Endothelial cell of umbilical vein (primary cell): ENCODE measurements at regions of chr5 and their contacts with region 1.

Region 1: GRCh38 chr5:176415952-176416924 is at the start of gene CLTB:
- DNase-seq: peak; percentile 81
- H3K4me3 ChIP-seq: peak within 1 kb of the TSS; percentile 78 to 84 (median 82)
- H3K27ac ChIP-seq: peak within 1 kb of the TSS; percentile 86
- H3K4me1 ChIP-seq: peaks cover 12% of the 10 kb centered on the region
- H3K27me3 ChIP-seq: no peaks in the 10 kb centered on the region
- CTCF ChIP-seq: peak; percentile 65 to 86
- POLR2A ChIP-seq: peak; percentile 67
- total RNA-seq, gene CLTB: 73.2 and 108 TPM in 2 replicates

Region 2: DNA sequence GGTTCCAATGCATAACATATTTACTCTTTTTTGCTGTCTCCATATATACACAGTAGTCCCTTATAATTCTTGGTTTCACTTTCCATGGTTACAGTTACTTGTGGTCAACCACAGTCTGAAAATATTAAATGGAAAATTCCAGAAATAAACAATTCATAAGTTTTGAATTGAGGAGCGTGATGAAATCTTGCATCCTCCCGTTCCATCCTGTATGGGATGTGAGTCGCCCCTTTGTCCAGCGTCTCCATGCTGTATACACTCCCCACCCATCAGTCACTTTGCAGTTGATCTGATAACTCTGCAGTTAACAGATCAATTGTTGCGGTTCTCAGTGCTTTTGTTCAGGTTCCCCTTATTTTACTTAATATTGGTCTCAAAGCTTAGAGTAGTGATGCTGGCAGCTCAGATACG is 20.4 kb after region 1 on chr5:
- CTCF ChIA-PET with region 1: interaction called, 17 read pairs
- POLR2A ChIA-PET with region 1: no interaction called
- dilution Hi-C with region 1: no loop called
- intact Hi-C with region 1: loop called (anchors 1 kb)
- DNase-seq: peak; percentile 47
- H3K4me3 ChIP-seq: peak overlapping the region in 1 of 3 experiments; percentile 32
- H3K27ac ChIP-seq: peak overlapping the region; percentile 68
- H3K4me1 ChIP-seq: peaks cover 24% of the 10 kb centered on the region
- H3K27me3 ChIP-seq: no peaks in the 10 kb centered on the region
- CTCF ChIP-seq: no peak
- POLR2A ChIP-seq: no peak

Region 3: DNA sequence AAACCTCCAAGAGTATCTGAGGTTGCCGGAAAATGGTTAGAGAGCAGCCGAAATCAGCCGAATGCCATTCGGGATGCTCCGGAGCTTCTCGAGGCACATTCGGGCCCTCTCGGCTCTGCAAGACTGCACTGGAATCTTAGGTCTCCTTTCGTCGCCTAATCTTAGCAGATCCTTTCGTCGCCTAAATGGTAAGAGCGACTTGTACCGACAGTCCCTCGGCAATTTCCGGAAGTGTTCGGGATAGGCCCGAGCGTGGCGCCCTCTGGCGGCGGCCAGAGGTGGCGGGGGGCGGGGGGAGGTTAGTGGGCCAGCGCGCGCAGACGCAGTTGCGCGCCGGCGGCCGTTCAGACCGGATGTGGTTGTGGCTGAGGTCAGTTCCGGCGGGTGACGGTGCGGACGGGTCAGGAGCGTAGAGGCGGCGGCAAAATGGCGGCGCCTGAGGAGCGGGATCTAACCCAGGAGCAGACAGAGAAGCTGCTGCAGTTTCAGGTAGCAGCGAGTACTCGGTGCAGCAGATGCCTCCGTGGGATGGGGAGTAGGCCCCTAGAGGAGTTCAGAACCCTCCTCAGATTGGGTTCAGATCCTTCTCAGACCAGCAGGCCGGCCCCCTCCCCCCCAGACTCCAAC is 31.9 kb after region 1 on chr5 and contains the start of gene FAF2:
- CTCF ChIA-PET with region 1: interaction called, 88 read pairs
- POLR2A ChIA-PET with region 1: interaction called, 4 read pairs
- dilution Hi-C with region 1: no loop called
- intact Hi-C with region 1: loop called (anchors 1 kb)
- DNase-seq: peak; percentile 99
- H3K4me3 ChIP-seq: peak within 1 kb of the TSS; percentile 75 to 99 (median 90)
- H3K27ac ChIP-seq: peak within 1 kb of the TSS; percentile 98
- H3K4me1 ChIP-seq: peaks cover 14% of the 10 kb centered on the region
- H3K27me3 ChIP-seq: no peaks in the 10 kb centered on the region
- CTCF ChIP-seq: peak; percentile 96 to 100
- POLR2A ChIP-seq: peak; percentile 94
- total RNA-seq, gene FAF2: 43.5 and 50.1 TPM in 2 replicates

Region 4: GRCh38 chr5:176537608-176538504 is 121.6 kb after region 1 on chr5:
- CTCF ChIA-PET with region 1: interaction called, 18 read pairs
- POLR2A ChIA-PET with region 1: no interaction called
- dilution Hi-C with region 1: no loop called
- intact Hi-C with region 1: loop called (anchors 1 kb)
- DNase-seq: peak; percentile 99
- H3K4me3 ChIP-seq: peak overlapping the region; percentile 68 to 79 (median 79)
- H3K27ac ChIP-seq: peak overlapping the region; percentile 83
- H3K4me1 ChIP-seq: peaks cover 59% of the 10 kb centered on the region
- H3K27me3 ChIP-seq: no peaks in the 10 kb centered on the region
- CTCF ChIP-seq: no peak
- POLR2A ChIP-seq: no peak

Region 5: GRCh38 chr5:176573564-176574296 is 157.5 kb after region 1 on chr5:
- CTCF ChIA-PET with region 1: interaction called, 12 read pairs
- POLR2A ChIA-PET with region 1: no interaction called
- dilution Hi-C with region 1: no loop called
- intact Hi-C with region 1: loop called (anchors 1 kb)
- DNase-seq: peak; percentile 45
- H3K4me3 ChIP-seq: no peak overlapping the region
- H3K27ac ChIP-seq: no peak overlapping the region
- H3K4me1 ChIP-seq: no peaks in the 10 kb centered on the region
- H3K27me3 ChIP-seq: no peaks in the 10 kb centered on the region
- CTCF ChIP-seq: peak; percentile 74 to 91
- POLR2A ChIP-seq: no peak